ENCODE measurements at regions of chr7 and their contacts with region 1.

Region 1: GRCh38 chr7:45259966-45260646 is 102.5 kb downstream of the RAMP3 start:
- DNase-seq: peak in 4 of 5 donors; percentile 54 to 60 (median 58)
- H3K4me3 ChIP-seq: no peak overlapping the region
- H3K4me3 Mint-ChIP-seq: peak overlapping the region in 1 of 8 donors; percentile 51
- H3K27ac ChIP-seq: no peak overlapping the region
- H3K27ac Mint-ChIP-seq: no peak overlapping the region
- H3K4me1 ChIP-seq: no peaks in the 10 kb centered on the region
- H3K4me1 Mint-ChIP-seq: peaks cover 0 to 2% (median 0%) of the 10 kb centered on the region in 4 donors
- H3K27me3 ChIP-seq: no peaks in the 10 kb centered on the region
- H3K27me3 Mint-ChIP-seq: peaks cover 10 to 24% of the 10 kb centered on the region in 2 donors

Region 2: DNA sequence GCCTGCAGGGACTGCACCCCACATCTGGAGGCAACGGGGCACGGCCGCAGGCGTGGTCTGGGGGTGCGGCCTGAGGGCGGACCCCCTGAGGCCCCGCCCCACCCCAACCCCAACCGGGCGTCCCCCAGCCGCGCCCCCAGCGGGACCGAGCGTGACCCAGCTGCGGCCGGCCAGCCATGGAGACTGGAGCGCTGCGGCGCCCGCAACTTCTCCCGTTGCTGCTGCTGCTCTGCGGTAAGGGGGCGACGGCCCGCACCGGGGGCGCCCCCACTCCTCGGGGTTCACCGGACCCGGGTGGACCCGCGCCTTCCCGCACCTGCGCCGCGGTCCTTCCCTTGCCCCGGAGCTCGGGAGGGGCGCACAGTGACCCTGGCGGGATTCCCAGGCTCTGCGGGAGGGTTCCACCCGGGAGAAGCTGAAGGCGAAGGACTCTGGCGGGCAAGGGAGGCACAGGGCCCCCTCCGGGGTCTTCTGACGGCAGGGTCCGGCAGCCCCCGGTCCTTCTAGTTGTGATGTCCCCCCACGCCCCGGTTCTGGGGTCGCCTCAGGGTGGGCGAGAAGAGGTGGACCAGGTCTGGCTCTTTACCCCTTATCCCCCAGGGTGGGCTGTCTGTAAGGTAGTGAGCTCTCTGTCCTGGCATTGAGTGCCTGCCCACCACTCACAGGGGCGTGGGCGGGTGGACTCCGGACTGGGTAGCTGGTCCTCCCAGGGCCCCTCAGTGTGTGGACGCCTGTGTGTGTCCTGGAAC is 102.3 kb before region 1 on chr7 and contains the start of gene RAMP3:
- CTCF ChIA-PET with region 1: interaction called, 40 read pairs
- POLR2A ChIA-PET with region 1: interaction called, 3 read pairs
- intact Hi-C with region 1: no loop called
- DNase-seq: no peak
- H3K4me3 ChIP-seq: no peak within 1 kb of the TSS
- H3K4me3 Mint-ChIP-seq: peak within 1 kb of the TSS in 5 of 8 donors; percentile 22 to 55 (median 40)
- H3K27ac ChIP-seq: no peak within 1 kb of the TSS
- H3K27ac Mint-ChIP-seq: peak within 1 kb of the TSS in 2 of 7 donors; percentile 37 to 60
- H3K4me1 ChIP-seq: no peaks in the 10 kb centered on the region
- H3K4me1 Mint-ChIP-seq: peaks cover 2 to 9% (median 7%) of the 10 kb centered on the region in 4 donors
- H3K27me3 ChIP-seq: peaks cover 6% of the 10 kb centered on the region
- H3K27me3 Mint-ChIP-seq: peaks cover 9 to 29% of the 10 kb centered on the region in 2 donors
- total RNA-seq, gene RAMP3: not detected